ENCODE measurements at regions of chr7 and their contacts with region 1.

Region 1: GRCh38 chr7:81094952-81095351 is 176.1 kb upstream of the SEMA3C start:
- DNase-seq: no peak
- H3K4me3 ChIP-seq: no peak overlapping the region
- H3K27ac ChIP-seq: no peak overlapping the region
- H3K4me1 ChIP-seq: no peaks in the 10 kb centered on the region
- H3K27me3 ChIP-seq: no peaks in the 10 kb centered on the region
- CTCF ChIP-seq: no peak
- EP300 ChIP-seq: no peak
- POLR2A ChIP-seq: no peak

Region 2: DNA sequence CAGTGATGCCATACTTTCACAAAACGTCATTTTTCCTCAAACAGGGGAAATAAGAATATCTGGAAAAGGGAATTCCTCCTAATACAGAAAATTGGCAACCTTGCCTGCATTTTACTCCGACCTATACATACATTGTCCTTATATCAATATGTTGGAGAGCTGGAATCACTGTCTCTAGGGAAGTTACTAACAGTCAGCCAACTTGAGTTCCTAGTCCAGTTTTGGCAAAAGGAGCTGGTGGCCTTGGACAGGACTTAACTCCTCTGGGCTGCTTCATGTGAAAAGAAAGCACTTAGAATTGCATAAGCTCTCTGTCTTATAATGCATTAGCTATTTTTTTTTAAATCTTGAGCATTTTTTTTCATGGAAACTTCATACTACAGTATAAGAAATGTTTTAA is 849.1 kb after region 1 on chr7:
- in situ Hi-C with region 1: no loop called
- intact Hi-C with region 1: loop called (anchors 5 kb)
- DNase-seq: no peak
- H3K4me3 ChIP-seq: no peak overlapping the region
- H3K27ac ChIP-seq: no peak overlapping the region
- H3K4me1 ChIP-seq: no peaks in the 10 kb centered on the region
- H3K27me3 ChIP-seq: no peaks in the 10 kb centered on the region
- CTCF ChIP-seq: no peak
- EP300 ChIP-seq: no peak
- POLR2A ChIP-seq: no peak

Measured in transverse colon (tissue), 4 donors.